ENCODE measurements at regions of chr6 and their contacts with region 1.

Region 1: GRCh38 chr6:20401205-20402091 is at the start of gene E2F3:
- DNase-seq: peak; percentile 99 to 100
- ATAC-seq: peak; percentile 97
- H3K4me3 ChIP-seq: peak within 1 kb of the TSS; percentile 92 to 94
- H3K27ac ChIP-seq: peak within 1 kb of the TSS; percentile 4 to 47
- H3K4me1 ChIP-seq: no peaks in the 10 kb centered on the region
- H3K27me3 ChIP-seq: no peaks in the 10 kb centered on the region
- total RNA-seq, gene E2F3: 12.7 to 15.5 TPM

Region 2: DNA sequence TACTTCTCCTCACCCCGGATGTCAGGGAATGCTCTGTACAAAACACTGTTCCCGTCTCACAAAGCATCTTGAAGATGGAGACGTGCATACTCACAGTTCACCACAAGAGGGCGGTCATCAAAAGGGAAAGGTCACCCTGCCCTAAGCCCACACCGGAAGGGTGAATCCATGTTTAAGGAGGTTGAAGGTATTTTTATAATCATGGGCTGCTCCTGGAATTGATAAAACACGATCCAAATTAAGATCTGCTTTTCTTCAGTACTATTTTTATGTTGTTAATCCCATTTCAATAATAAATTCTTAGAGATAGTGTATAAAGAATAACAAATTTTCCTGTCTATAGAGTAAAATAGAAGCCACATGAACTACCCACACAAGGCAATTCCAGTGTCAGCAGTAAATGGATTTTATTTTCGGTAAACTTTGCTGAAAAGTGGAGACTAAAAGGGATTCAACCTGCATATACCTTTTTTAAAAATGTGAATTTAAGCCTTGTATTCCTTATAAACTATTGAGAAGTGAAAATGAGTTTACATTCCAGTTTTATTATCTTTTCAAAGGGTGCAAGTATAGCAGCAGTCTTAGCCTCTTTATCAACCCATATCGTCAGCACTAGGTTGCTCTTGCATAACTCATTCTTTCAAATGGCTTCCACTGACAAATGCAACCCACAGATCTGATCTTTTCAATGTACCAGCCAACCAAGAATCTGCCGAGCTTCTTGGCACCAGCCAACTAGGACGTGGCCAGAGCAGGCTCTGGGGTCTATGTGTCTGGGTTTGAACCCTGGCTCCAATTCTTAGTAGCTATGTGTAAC is 109.5 kb before region 1 on chr6:
- intact Hi-C with region 1: loop called (anchors 5 kb)
- DNase-seq: peak; percentile 80 to 83
- ATAC-seq: peak; percentile 90
- H3K4me3 ChIP-seq: no peak overlapping the region
- H3K27ac ChIP-seq: no peak overlapping the region
- H3K4me1 ChIP-seq: no peaks in the 10 kb centered on the region
- H3K27me3 ChIP-seq: no peaks in the 10 kb centered on the region

Region 3: DNA sequence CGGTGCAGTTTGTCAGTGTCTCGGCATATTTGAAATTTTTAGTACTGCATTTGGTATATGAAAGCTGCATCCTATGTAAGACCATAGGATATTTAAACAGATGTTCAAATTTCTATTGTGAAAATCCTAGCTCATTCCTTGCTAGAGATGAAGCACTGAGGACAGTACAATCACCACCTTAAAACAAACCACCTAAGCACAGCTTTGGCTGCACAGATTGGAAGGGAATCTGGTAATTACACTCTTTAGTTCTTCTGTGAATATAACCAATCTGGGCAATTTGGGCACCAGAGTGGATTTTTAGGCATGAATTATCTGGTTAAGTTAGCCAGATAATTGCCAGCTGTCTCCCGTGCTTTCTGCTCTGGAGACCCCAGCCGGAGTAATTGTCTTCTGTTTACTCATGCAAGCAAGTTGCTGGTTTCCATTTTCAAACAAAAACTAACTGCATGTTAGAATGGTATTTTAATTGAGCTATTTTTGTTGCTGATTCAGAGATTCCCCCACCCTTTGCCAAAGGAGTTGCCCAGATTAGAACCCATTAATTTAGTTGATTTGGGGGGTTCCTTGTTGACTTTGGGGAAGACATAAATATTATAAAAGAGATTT is 37.1 kb after region 1 on chr6:
- intact Hi-C with region 1: loop called (anchors 5 kb)
- DNase-seq: no peak
- ATAC-seq: no peak
- H3K4me3 ChIP-seq: no peak overlapping the region
- H3K27ac ChIP-seq: no peak overlapping the region
- H3K4me1 ChIP-seq: no peaks in the 10 kb centered on the region
- H3K27me3 ChIP-seq: no peaks in the 10 kb centered on the region

Region 4: GRCh38 chr6:20444786-20445271 is 43.4 kb after region 1 on chr6:
- intact Hi-C with region 1: loop called in 1 of 2 experiments (anchors 5 kb)
- DNase-seq: no peak
- ATAC-seq: no peak
- H3K4me3 ChIP-seq: no peak overlapping the region
- H3K27ac ChIP-seq: no peak overlapping the region
- H3K4me1 ChIP-seq: peaks cover 3 to 5% of the 10 kb centered on the region in 2 donors
- H3K27me3 ChIP-seq: no peaks in the 10 kb centered on the region

Region 5: GRCh38 chr6:20455251-20455940 is 53.9 kb after region 1 on chr6:
- intact Hi-C with region 1: loop called in 1 of 2 experiments (anchors 5 kb)
- DNase-seq: no peak
- ATAC-seq: no peak
- H3K4me3 ChIP-seq: no peak overlapping the region
- H3K27ac ChIP-seq: no peak overlapping the region
- H3K4me1 ChIP-seq: peaks cover 0 to 14% of the 10 kb centered on the region in 2 donors
- H3K27me3 ChIP-seq: no peaks in the 10 kb centered on the region

Region 6: DNA sequence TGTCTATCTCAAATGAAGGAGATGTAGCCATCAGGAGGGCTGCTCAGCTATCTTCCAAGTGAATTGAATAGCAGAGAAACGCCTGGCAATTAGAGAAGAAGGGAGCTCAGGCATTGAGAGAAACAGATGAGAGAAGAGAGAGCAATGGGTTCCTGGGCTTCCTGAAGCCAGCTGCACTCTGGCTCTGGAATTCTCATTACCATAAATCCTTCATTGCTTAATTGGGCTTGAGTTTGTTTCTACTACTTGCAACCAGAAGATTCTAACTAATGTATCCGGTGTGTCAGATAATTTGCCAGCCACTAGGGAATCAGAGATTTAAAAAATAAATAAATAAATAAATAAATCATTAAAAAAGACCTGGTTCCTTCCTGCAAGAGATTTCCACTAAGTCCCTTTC is 107.8 kb after region 1 on chr6:
- intact Hi-C with region 1: no loop called
- DNase-seq: no peak
- ATAC-seq: no peak
- H3K4me3 ChIP-seq: no peak overlapping the region
- H3K27ac ChIP-seq: no peak overlapping the region
- H3K4me1 ChIP-seq: no peaks in the 10 kb centered on the region
- H3K27me3 ChIP-seq: no peaks in the 10 kb centered on the region

Region 7: DNA sequence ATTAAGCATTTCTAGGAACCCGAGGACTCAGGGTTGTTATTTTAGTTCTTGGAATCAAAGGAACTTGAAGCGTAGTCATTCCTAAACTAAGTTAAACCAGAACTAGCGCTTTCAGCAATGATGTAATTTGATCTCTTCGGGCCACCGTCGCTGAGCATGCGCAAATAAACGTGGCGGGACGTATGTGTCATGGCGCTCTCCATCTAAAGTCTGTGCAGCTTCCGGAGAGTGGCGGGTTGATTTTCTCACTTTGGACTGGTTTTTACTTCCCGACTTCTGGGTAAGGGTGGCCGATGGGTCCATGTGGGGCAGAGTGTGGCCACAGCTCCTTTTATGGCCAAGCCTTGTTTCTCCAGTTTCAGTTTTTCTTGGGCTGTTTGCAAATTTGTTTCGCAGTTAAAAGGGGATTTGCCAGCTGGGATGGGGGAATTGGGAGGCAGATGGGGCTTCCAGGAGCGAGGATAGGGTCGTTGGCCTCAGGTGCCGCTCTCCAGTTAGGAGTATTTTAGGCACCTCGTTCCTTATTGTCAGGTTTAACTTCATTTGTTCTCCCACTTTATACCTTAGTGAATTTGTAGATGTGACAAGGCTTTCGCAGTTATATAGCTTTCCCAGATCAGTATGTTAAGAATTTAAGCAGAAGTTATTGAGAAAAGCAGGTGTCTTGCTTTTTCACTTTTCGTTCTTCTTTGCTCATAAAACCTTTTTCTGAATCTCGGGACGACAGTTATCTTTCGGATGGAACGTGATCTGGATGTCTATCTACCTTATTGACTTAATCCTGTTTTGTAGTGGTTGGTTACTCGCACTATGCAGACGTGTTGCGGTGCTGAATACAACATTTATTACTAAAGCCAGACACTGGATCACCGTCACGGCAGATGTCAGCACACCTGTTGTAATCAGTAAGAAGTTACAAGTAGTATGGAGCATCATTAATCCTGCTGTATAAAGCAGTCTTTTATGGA is 133.1 kb after region 1 on chr6 and contains the start of gene CDKAL1:
- intact Hi-C with region 1: loop called in 1 of 2 experiments (anchors 2 kb)
- DNase-seq: peak; percentile 92 to 95
- ATAC-seq: peak; percentile 95
- H3K4me3 ChIP-seq: peak within 1 kb of the TSS; percentile 92 to 100
- H3K27ac ChIP-seq: peak within 1 kb of the TSS; percentile 77 to 83
- H3K4me1 ChIP-seq: peaks cover 0 to 2% of the 10 kb centered on the region in 2 donors
- H3K27me3 ChIP-seq: no peaks in the 10 kb centered on the region
- total RNA-seq, gene CDKAL1: 15.3 to 21.7 TPM

Measured in aorta (tissue), 5 donors.